CD4-positive, alpha-beta T cell (primary cell): ENCODE measurements at regions of chr1 and their contacts with region 1.

Region 1: GRCh38 chr1:40612345-40612831 is 53.1 kb downstream of the RIMS3 start:
- DNase-seq: peak; percentile 47 to 83 (median 60)
- ATAC-seq: peak; percentile 90
- H3K4me3 ChIP-seq: no peak overlapping the region
- H3K4me3 Mint-ChIP-seq: no peak overlapping the region
- H3K27ac ChIP-seq: no peak overlapping the region
- H3K27ac Mint-ChIP-seq: no peak overlapping the region
- H3K4me1 ChIP-seq: no peaks in the 10 kb centered on the region
- H3K4me1 Mint-ChIP-seq: no peaks in the 10 kb centered on the region
- H3K27me3 ChIP-seq: no peaks in the 10 kb centered on the region
- H3K27me3 Mint-ChIP-seq: no peaks in the 10 kb centered on the region
- CTCF ChIP-seq: peak; percentile 80

Region 2: GRCh38 chr1:40267767-40268187 is 344.6 kb before region 1 on chr1:
- CTCF ChIA-PET with region 1: no interaction called
- POLR2A ChIA-PET with region 1: no interaction called
- intact Hi-C with region 1: no loop called
- DNase-seq: no peak
- ATAC-seq: no peak
- H3K4me3 ChIP-seq: no peak overlapping the region
- H3K4me3 Mint-ChIP-seq: no peak overlapping the region
- H3K27ac ChIP-seq: no peak overlapping the region
- H3K27ac Mint-ChIP-seq: no peak overlapping the region
- H3K4me1 ChIP-seq: peaks cover 5% of the 10 kb centered on the region
- H3K4me1 Mint-ChIP-seq: peaks cover 9% of the 10 kb centered on the region
- H3K27me3 ChIP-seq: no peaks in the 10 kb centered on the region
- H3K27me3 Mint-ChIP-seq: no peaks in the 10 kb centered on the region
- CTCF ChIP-seq: no peak

Region 3: DNA sequence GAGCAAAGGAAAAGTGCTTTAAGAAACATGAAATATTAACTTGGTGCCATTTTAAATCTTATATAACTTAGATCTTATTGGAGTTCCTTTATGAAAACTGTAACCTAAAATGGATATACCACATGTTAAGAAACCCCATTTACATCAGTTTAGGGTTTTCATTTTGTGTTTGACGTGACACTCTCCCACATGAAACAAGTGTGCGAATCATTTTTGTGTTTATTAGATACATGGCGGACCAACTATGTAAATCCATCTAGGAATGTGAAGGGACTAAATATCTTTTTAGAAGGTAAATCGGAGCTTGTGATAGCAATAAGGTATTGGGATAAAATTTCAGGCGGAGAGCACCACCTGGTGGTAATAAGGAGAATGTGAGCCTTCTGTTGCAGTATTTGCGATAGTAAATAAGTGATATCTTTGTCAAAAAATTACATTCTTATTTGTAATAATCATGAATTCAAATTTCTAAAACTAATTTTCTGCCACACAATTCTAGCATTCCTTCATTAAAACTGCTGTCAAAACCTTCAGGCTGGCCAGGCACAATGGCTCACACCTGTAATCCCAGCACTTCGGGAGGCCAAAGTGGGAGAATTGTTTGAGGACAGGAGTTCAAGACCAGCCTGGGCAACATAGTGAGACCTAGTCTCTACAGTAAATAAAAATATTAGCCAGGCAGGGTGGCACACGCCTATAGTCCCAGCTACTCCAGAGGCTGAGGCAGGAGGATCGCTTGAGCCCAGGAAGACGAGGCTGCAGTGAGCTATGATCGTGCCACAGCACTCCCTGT is 207.5 kb before region 1 on chr1:
- CTCF ChIA-PET with region 1: no interaction called
- POLR2A ChIA-PET with region 1: no interaction called
- intact Hi-C with region 1: no loop called
- DNase-seq: peak in 7 of 14 experiments; percentile 25 to 86 (median 65)
- ATAC-seq: peak; percentile 81
- H3K4me3 ChIP-seq: no peak overlapping the region
- H3K4me3 Mint-ChIP-seq: peak overlapping the region; percentile 50
- H3K27ac ChIP-seq: peak overlapping the region; percentile 33 to 48
- H3K27ac Mint-ChIP-seq: peak overlapping the region; percentile 86
- H3K4me1 ChIP-seq: peaks cover 47% of the 10 kb centered on the region
- H3K4me1 Mint-ChIP-seq: peaks cover 63% of the 10 kb centered on the region
- H3K27me3 ChIP-seq: no peaks in the 10 kb centered on the region
- H3K27me3 Mint-ChIP-seq: no peaks in the 10 kb centered on the region
- CTCF ChIP-seq: peak; percentile 94

Region 4: DNA sequence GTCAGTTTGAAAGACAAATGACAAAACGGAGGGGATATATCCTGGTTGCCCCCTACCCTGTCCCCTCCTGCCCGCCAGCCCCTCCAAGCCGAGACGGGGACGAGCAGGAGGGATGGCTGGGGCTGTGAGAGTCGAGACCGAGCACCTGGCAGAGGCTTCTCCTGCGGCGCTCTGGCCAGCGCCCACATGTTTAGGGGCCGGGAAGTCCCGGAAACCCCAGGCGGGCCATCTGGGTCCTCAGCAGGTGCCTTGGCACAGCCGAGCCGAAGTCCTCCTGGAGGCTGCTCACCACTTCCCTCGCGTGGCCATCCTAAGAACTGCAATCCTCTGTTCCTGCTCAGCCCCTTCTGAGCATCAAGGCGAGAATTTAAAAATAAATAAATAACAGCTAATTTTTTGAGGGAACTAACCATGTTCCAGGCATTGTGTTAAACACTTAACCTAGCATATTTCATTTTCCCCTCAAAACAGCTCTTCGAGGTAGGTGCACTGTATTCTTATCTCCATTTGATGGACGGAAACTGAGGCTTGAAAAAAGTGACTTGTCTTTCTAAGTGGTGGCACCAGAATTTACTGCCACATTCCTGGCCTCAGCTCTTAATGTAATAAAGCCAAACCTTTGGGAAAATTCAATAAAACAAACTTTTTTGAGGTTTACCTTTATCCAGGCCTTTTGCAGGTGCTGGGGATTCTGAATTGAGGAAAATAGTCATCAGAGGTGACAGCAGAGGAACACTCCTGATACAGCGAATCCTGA is 56.6 kb after region 1 on chr1:
- CTCF ChIA-PET with region 1: interaction called, 4 read pairs
- POLR2A ChIA-PET with region 1: no interaction called
- intact Hi-C with region 1: loop called (anchors 1 kb)
- DNase-seq: peak; percentile 72 to 91 (median 82)
- ATAC-seq: peak; percentile 78
- H3K4me3 ChIP-seq: peak overlapping the region; percentile 36
- H3K4me3 Mint-ChIP-seq: peak overlapping the region; percentile 69
- H3K27ac ChIP-seq: no peak overlapping the region
- H3K27ac Mint-ChIP-seq: no peak overlapping the region
- H3K4me1 ChIP-seq: peaks cover 23% of the 10 kb centered on the region
- H3K4me1 Mint-ChIP-seq: peaks cover 20% of the 10 kb centered on the region
- H3K27me3 ChIP-seq: no peaks in the 10 kb centered on the region
- H3K27me3 Mint-ChIP-seq: no peaks in the 10 kb centered on the region
- CTCF ChIP-seq: peak; percentile 94

Region 5: DNA sequence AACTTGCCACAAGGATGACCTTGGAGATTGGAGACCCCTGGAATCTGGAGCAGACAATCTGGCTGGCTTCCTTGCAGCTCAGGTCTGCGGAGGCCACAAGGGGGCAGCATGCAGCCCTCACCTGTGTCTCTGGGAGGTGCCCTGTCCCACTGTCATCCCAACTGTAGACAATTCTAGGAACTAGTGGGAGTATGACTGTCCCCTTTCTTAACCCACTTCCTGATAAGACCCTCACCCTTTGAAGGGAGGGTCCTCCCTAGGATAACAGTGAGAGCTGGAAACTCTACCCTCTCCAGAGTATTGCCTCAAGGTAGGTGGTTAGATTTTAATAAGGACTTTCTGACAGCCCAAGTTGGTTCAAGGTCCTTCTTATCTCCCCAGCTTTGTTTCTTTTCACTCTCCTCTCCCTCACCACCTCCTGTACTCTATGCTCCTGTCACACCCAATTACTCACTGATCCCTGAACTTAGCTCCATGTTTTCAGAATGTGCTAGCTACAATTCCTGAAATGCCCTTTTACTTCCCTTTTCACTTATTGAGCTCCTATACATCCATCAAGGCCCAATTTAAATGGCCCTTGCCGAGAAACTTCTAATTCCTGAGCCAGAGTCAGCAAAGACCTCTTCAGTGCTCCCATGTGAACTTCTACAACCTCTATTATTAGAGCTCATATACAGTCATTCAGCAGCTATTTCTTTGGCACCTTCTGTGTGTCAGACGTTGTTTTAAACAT is 162.0 kb after region 1 on chr1:
- CTCF ChIA-PET with region 1: no interaction called
- POLR2A ChIA-PET with region 1: no interaction called
- intact Hi-C with region 1: loop called (anchors 5 to 10 kb)
- DNase-seq: peak; percentile 51 to 80 (median 61)
- ATAC-seq: peak; percentile 64
- H3K4me3 ChIP-seq: no peak overlapping the region
- H3K4me3 Mint-ChIP-seq: no peak overlapping the region
- H3K27ac ChIP-seq: no peak overlapping the region
- H3K27ac Mint-ChIP-seq: no peak overlapping the region
- H3K4me1 ChIP-seq: no peaks in the 10 kb centered on the region
- H3K4me1 Mint-ChIP-seq: no peaks in the 10 kb centered on the region
- H3K27me3 ChIP-seq: no peaks in the 10 kb centered on the region
- H3K27me3 Mint-ChIP-seq: no peaks in the 10 kb centered on the region
- CTCF ChIP-seq: peak; percentile 85

Region 6: GRCh38 chr1:40849801-40850592 is 237.6 kb after region 1 on chr1:
- CTCF ChIA-PET with region 1: interaction called, 3 read pairs
- POLR2A ChIA-PET with region 1: no interaction called
- intact Hi-C with region 1: loop called in 1 of 2 experiments (anchors 1 kb)
- DNase-seq: peak; percentile 59 to 87 (median 72)
- ATAC-seq: peak; percentile 92
- H3K4me3 ChIP-seq: no peak overlapping the region
- H3K4me3 Mint-ChIP-seq: peak overlapping the region; percentile 30
- H3K27ac ChIP-seq: no peak overlapping the region
- H3K27ac Mint-ChIP-seq: no peak overlapping the region
- H3K4me1 ChIP-seq: peaks cover 7% of the 10 kb centered on the region
- H3K4me1 Mint-ChIP-seq: peaks cover 15% of the 10 kb centered on the region
- H3K27me3 ChIP-seq: no peaks in the 10 kb centered on the region
- H3K27me3 Mint-ChIP-seq: no peaks in the 10 kb centered on the region
- CTCF ChIP-seq: peak; percentile 90

Region 7: GRCh38 chr1:40951943-40952743 is 339.8 kb after region 1 on chr1:
- CTCF ChIA-PET with region 1: interaction called, 3 read pairs
- POLR2A ChIA-PET with region 1: no interaction called
- intact Hi-C with region 1: loop called (anchors 1 to 5 kb)
- DNase-seq: peak; percentile 35 to 75 (median 46)
- ATAC-seq: peak; percentile 54
- H3K4me3 ChIP-seq: no peak overlapping the region
- H3K4me3 Mint-ChIP-seq: no peak overlapping the region
- H3K27ac ChIP-seq: no peak overlapping the region
- H3K27ac Mint-ChIP-seq: no peak overlapping the region
- H3K4me1 ChIP-seq: peaks cover 7% of the 10 kb centered on the region
- H3K4me1 Mint-ChIP-seq: no peaks in the 10 kb centered on the region
- H3K27me3 ChIP-seq: peaks cover 3 to 11% of the 10 kb centered on the region in 2 experiments
- H3K27me3 Mint-ChIP-seq: peaks cover 41% of the 10 kb centered on the region
- CTCF ChIP-seq: peak; percentile 93

Region 8: GRCh38 chr1:41003640-41004220 is 391.3 kb after region 1 on chr1:
- CTCF ChIA-PET with region 1: no interaction called
- POLR2A ChIA-PET with region 1: no interaction called
- intact Hi-C with region 1: loop called in 1 of 2 experiments (anchors 5 kb)
- DNase-seq: peak; percentile 69 to 94 (median 83)
- ATAC-seq: peak; percentile 100
- H3K4me3 ChIP-seq: no peak overlapping the region
- H3K4me3 Mint-ChIP-seq: no peak overlapping the region
- H3K27ac ChIP-seq: no peak overlapping the region
- H3K27ac Mint-ChIP-seq: peak overlapping the region; percentile 34
- H3K4me1 ChIP-seq: peaks cover 14% of the 10 kb centered on the region
- H3K4me1 Mint-ChIP-seq: peaks cover 29% of the 10 kb centered on the region
- H3K27me3 ChIP-seq: no peaks in the 10 kb centered on the region
- H3K27me3 Mint-ChIP-seq: no peaks in the 10 kb centered on the region
- CTCF ChIP-seq: peak; percentile 62